Stomach (tissue), 19 donors: ENCODE measurements at regions of chr3 and their contacts with region 1.

Region 1: GRCh38 chr3:132722164-132723024 is at the start of gene NPHP3:
- DNase-seq: peak; percentile 98 to 99
- H3K4me3 ChIP-seq: peak within 1 kb of the TSS; percentile 88 to 95 (median 94)
- H3K27ac ChIP-seq: peak within 1 kb of the TSS; percentile 94 to 100 (median 98)
- H3K4me1 ChIP-seq: peaks cover 20 to 51% (median 34%) of the 10 kb centered on the region in 4 donors
- H3K27me3 ChIP-seq: no peaks in the 10 kb centered on the region
- CTCF ChIP-seq: no peak
- EP300 ChIP-seq: no peak
- POLR2A ChIP-seq: peak in 2 of 4 donors; percentile 11 to 49
- total RNA-seq, gene NPHP3: 19.3 to 213 (median 78.1) TPM

Region 2: GRCh38 chr3:133038110-133039040 is 316.0 kb after region 1 on chr3 and contains the start of gene TMEM108:
- intact Hi-C with region 1: loop called (anchors 5 kb)
- DNase-seq: peak; percentile 81 to 95
- H3K4me3 ChIP-seq: peak within 1 kb of the TSS; percentile 58 to 72 (median 64)
- H3K27ac ChIP-seq: peak within 1 kb of the TSS in 3 of 5 donors; percentile 2 to 40 (median 28)
- H3K4me1 ChIP-seq: peaks cover 7 to 45% (median 34%) of the 10 kb centered on the region in 4 donors
- H3K27me3 ChIP-seq: peaks cover 0 to 36% (median 25%) of the 10 kb centered on the region in 3 donors
- CTCF ChIP-seq: no peak
- EP300 ChIP-seq: no peak
- POLR2A ChIP-seq: no peak
- total RNA-seq, gene TMEM108: 0.43 to 1.3 (median 0.92) TPM in 3 of 5 donors, not detected in the others

Region 3: GRCh38 chr3:133426721-133427120 is 704.3 kb after region 1 on chr3:
- intact Hi-C with region 1: loop called (anchors 10 kb)
- DNase-seq: no peak
- H3K4me3 ChIP-seq: no peak overlapping the region
- H3K27ac ChIP-seq: no peak overlapping the region
- H3K4me1 ChIP-seq: peaks cover 0 to 8% (median 0%) of the 10 kb centered on the region in 4 donors
- H3K27me3 ChIP-seq: peaks cover 0 to 9% (median 0%) of the 10 kb centered on the region in 3 donors
- CTCF ChIP-seq: no peak
- EP300 ChIP-seq: no peak
- POLR2A ChIP-seq: no peak